Left lung (tissue), 14 donors: ENCODE measurements at regions of chr15 and their contacts with region 1.

Region 1: GRCh38 chr15:66774001-66774814 is 72.2 kb downstream of the SMAD6 start:
- DNase-seq: peak; percentile 81 to 92 (median 86)
- ATAC-seq: peak; percentile 96
- H3K4me3 ChIP-seq: no peak overlapping the region
- H3K27ac ChIP-seq: peak overlapping the region; percentile 11 to 55
- H3K4me1 ChIP-seq: peaks cover 22 to 60% of the 10 kb centered on the region in 2 donors
- H3K27me3 ChIP-seq: no peaks in the 10 kb centered on the region
- CTCF ChIP-seq: peak; percentile 89 to 90

Region 2: GRCh38 chr15:66619151-66619903 is 154.9 kb before region 1 on chr15:
- intact Hi-C with region 1: loop called in 1 of 2 experiments (anchors 10 kb)
- DNase-seq: peak; percentile 62 to 93 (median 70)
- ATAC-seq: peak; percentile 85
- H3K4me3 ChIP-seq: no peak overlapping the region
- H3K27ac ChIP-seq: peak overlapping the region; percentile 82 to 91
- H3K4me1 ChIP-seq: peaks cover 20 to 75% of the 10 kb centered on the region in 2 donors
- H3K27me3 ChIP-seq: peaks cover 0 to 15% of the 10 kb centered on the region in 2 donors
- CTCF ChIP-seq: peak; percentile 78 to 91

Region 3: GRCh38 chr15:66715181-66715624 is 59.0 kb before region 1 on chr15:
- intact Hi-C with region 1: no loop called
- DNase-seq: no peak
- ATAC-seq: peak; percentile 56
- H3K4me3 ChIP-seq: no peak overlapping the region
- H3K27ac ChIP-seq: no peak overlapping the region
- H3K4me1 ChIP-seq: peaks cover 19 to 60% of the 10 kb centered on the region in 2 donors
- H3K27me3 ChIP-seq: no peaks in the 10 kb centered on the region
- CTCF ChIP-seq: no peak